ENCODE measurements at regions of chr1 and their contacts with region 1.

Region 1: GRCh38 chr1:6343506-6344405 is 49.8 kb downstream of the ACOT7 start:
- DNase-seq: peak; percentile 83
- H3K4me3 ChIP-seq: peak overlapping the region in 1 of 2 experiments; percentile 55; a peak in 1 of 4 replicates
- H3K27ac ChIP-seq: no peak overlapping the region
- H3K4me1 ChIP-seq: no peaks in the 10 kb centered on the region; a peak in 1 of 4 replicates
- H3K27me3 ChIP-seq: no peaks in the 10 kb centered on the region
- CTCF ChIP-seq: peak; percentile 88
- EP300 ChIP-seq: no peak
- RAD21 ChIP-seq: peak; percentile 93

Region 2: DNA sequence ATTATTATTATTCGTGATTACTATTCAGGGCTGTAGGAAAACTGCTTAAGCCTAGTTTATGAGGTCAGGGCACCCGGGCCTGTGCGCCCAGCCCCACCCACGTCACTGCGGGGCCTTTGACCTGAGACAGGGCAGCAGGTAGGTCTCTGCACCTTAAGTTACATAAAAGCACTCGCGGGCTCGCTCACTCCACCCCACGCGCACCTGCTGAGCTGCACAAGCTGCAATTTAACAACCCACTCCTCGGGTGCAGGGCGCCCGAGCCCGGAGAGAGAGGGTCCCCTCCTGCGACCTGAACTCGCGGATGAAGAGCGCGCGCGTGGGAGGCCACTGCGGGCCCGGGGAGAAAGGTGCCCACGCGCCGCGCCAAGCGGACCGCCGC is 108.5 kb before region 1 on chr1:
- CTCF ChIA-PET with region 1: interaction called, 12 read pairs
- POLR2A ChIA-PET with region 1: no interaction called
- DNase-seq: no peak
- H3K4me3 ChIP-seq: peak overlapping the region; percentile 66 to 79
- H3K27ac ChIP-seq: peak overlapping the region in 1 of 2 experiments; percentile 77; a peak in 2 of 4 replicates
- H3K4me1 ChIP-seq: peaks cover 0 to 9% of the 10 kb centered on the region in 2 experiments; a peak in 1 of 4 replicates
- H3K27me3 ChIP-seq: no peaks in the 10 kb centered on the region
- CTCF ChIP-seq: no peak
- EP300 ChIP-seq: no peak
- RAD21 ChIP-seq: no peak

Region 3: DNA sequence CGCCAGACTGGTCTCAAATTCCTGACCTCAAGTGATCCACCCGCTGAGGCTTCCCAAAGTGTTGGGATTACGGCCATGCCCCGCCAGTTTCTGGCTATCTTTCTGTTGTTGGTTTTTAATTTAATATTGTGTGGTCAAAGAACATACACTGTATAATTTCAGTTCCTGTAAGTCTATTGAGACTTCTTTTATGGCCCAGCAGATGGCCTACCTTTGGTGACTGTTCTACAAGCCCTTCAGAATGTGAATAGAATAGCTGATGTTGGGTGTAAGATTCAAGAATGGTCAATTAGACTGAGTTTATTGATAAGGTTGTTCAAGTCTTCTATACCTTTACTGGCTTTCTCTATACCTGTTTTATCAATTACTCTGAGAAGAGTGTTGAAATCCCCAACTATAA is 65.3 kb after region 1 on chr1:
- CTCF ChIA-PET with region 1: interaction called, 15 read pairs
- POLR2A ChIA-PET with region 1: no interaction called
- DNase-seq: no peak
- H3K4me3 ChIP-seq: no peak overlapping the region
- H3K27ac ChIP-seq: no peak overlapping the region
- H3K4me1 ChIP-seq: no peaks in the 10 kb centered on the region
- H3K27me3 ChIP-seq: no peaks in the 10 kb centered on the region
- CTCF ChIP-seq: no peak
- EP300 ChIP-seq: no peak
- RAD21 ChIP-seq: no peak

Region 4: GRCh38 chr1:6414443-6414844 is 70.7 kb after region 1 on chr1:
- CTCF ChIA-PET with region 1: interaction called, 15 read pairs
- POLR2A ChIA-PET with region 1: no interaction called
- DNase-seq: peak; percentile 87
- H3K4me3 ChIP-seq: no peak overlapping the region
- H3K27ac ChIP-seq: no peak overlapping the region
- H3K4me1 ChIP-seq: peaks cover 0 to 6% of the 10 kb centered on the region in 2 experiments; a peak in 1 of 4 replicates
- H3K27me3 ChIP-seq: peaks cover 17% of the 10 kb centered on the region
- CTCF ChIP-seq: peak; percentile 59
- EP300 ChIP-seq: no peak
- RAD21 ChIP-seq: peak; percentile 50